Endothelial cell of umbilical vein (primary cell): ENCODE measurements at regions of chr6 and their contacts with region 1.

Region 1: DNA sequence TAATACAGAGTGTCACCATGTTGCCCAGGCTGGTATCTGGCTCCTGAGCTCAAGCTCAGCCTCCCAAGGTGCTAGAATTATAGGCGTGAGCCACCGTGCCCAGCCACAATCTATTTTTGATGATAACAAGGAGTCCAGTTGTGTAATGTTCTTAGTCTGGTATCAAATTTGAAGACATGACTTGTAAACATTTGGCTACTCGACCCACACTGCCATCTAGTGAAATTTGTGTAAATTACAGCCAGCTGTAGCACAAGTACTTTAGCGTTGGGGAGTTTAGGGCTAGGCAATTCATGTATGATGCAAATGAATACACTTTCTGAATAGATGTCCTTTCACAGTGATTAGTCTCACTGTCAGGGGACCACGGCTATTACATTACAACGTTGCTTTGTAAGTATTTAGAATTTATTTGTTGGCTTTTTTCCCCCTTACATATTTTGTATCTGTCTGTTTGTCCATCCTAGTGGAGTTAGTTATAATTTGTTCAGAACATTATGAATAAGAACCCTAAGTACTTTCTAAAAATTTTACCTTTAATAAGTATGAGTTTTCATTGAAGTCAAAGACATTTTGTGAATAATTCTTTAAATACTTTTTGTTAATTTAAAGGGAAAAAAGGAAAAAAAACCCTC is 139.7 kb downstream of the PRDM13 start:
- DNase-seq: peak; percentile 81
- H3K4me3 ChIP-seq: no peak overlapping the region
- H3K27ac ChIP-seq: no peak overlapping the region
- H3K4me1 ChIP-seq: no peaks in the 10 kb centered on the region
- H3K27me3 ChIP-seq: peaks cover 12 to 20% of the 10 kb centered on the region in 2 experiments
- CTCF ChIP-seq: peak; percentile 58 to 64
- POLR2A ChIP-seq: no peak

Region 2: GRCh38 chr6:99434702-99435530 is 311.5 kb before region 1 on chr6:
- CTCF ChIA-PET with region 1: interaction called, 11 read pairs
- POLR2A ChIA-PET with region 1: no interaction called
- dilution Hi-C with region 1: no loop called
- intact Hi-C with region 1: loop called (anchors 10 kb)
- DNase-seq: peak; percentile 57
- H3K4me3 ChIP-seq: no peak overlapping the region
- H3K27ac ChIP-seq: no peak overlapping the region
- H3K4me1 ChIP-seq: no peaks in the 10 kb centered on the region
- H3K27me3 ChIP-seq: no peaks in the 10 kb centered on the region
- CTCF ChIP-seq: peak; percentile 17 to 25
- POLR2A ChIP-seq: no peak

Region 3: GRCh38 chr6:99467509-99468106 is 278.8 kb before region 1 on chr6:
- CTCF ChIA-PET with region 1: interaction called, 57 read pairs
- POLR2A ChIA-PET with region 1: no interaction called
- dilution Hi-C with region 1: no loop called
- intact Hi-C with region 1: loop called (anchors 1 kb)
- DNase-seq: peak; percentile 28
- H3K4me3 ChIP-seq: no peak overlapping the region
- H3K27ac ChIP-seq: no peak overlapping the region
- H3K4me1 ChIP-seq: no peaks in the 10 kb centered on the region
- H3K27me3 ChIP-seq: no peaks in the 10 kb centered on the region
- CTCF ChIP-seq: peak; percentile 25 to 48
- POLR2A ChIP-seq: no peak

Region 4: DNA sequence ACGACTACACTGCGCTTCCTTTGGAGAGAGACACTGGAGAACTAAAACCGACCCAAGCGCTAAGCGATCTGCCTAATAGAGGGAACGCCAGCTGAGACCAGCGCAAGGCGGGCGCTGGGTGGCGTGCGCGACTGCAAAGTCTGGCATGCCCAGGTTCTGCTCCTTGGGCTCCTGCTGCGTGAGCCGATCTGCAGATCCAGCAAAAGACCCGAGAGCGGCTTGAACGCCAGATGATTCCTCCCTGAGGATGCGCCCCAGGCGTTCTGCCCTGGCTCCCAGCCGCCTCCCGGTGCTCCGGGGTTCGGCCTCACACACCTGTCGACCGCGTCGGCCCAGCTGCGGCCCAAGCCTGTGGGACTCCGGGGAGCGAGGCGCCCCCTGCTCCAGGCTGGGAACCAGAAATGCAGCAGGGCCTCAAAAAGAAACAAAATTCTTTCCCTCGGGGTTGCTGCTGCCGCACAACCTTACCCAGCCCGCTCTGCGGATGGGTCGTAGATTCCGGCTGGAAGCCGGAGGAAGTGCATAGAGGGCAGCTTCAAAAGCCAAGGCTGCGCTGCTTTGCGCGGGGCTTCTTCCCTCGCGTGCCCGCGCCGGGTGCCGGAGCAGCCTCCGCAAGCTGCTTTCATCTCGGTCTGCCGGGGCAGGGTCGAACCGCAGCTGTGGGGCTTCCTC is 157.6 kb before region 1 on chr6:
- CTCF ChIA-PET with region 1: interaction called, 27 read pairs
- POLR2A ChIA-PET with region 1: no interaction called
- dilution Hi-C with region 1: no loop called
- intact Hi-C with region 1: loop called (anchors 1 kb)
- DNase-seq: peak; percentile 72
- H3K4me3 ChIP-seq: peak overlapping the region; percentile 11 to 40 (median 37)
- H3K27ac ChIP-seq: no peak overlapping the region
- H3K4me1 ChIP-seq: peaks cover 8% of the 10 kb centered on the region
- H3K27me3 ChIP-seq: peaks cover 71 to 77% of the 10 kb centered on the region in 2 experiments
- CTCF ChIP-seq: peak; percentile 36 to 69
- POLR2A ChIP-seq: no peak

Region 5: GRCh38 chr6:100105138-100105753 is 358.9 kb after region 1 on chr6:
- CTCF ChIA-PET with region 1: no interaction called
- POLR2A ChIA-PET with region 1: no interaction called
- dilution Hi-C with region 1: no loop called
- intact Hi-C with region 1: no loop called
- DNase-seq: no peak
- H3K4me3 ChIP-seq: no peak overlapping the region
- H3K27ac ChIP-seq: no peak overlapping the region
- H3K4me1 ChIP-seq: no peaks in the 10 kb centered on the region
- H3K27me3 ChIP-seq: peaks cover 11 to 25% of the 10 kb centered on the region in 2 experiments
- CTCF ChIP-seq: no peak
- POLR2A ChIP-seq: no peak

Region 6: GRCh38 chr6:100353276-100354015 is 607.1 kb after region 1 on chr6:
- CTCF ChIA-PET with region 1: no interaction called
- POLR2A ChIA-PET with region 1: no interaction called
- dilution Hi-C with region 1: no loop called
- intact Hi-C with region 1: no loop called
- DNase-seq: no peak
- H3K4me3 ChIP-seq: no peak overlapping the region
- H3K27ac ChIP-seq: no peak overlapping the region
- H3K4me1 ChIP-seq: peaks cover 20% of the 10 kb centered on the region
- H3K27me3 ChIP-seq: no peaks in the 10 kb centered on the region
- CTCF ChIP-seq: no peak
- POLR2A ChIP-seq: no peak